Spleen (tissue), 13 donors: ENCODE measurements at regions of chr7 and their contacts with region 1.

Region 1: DNA sequence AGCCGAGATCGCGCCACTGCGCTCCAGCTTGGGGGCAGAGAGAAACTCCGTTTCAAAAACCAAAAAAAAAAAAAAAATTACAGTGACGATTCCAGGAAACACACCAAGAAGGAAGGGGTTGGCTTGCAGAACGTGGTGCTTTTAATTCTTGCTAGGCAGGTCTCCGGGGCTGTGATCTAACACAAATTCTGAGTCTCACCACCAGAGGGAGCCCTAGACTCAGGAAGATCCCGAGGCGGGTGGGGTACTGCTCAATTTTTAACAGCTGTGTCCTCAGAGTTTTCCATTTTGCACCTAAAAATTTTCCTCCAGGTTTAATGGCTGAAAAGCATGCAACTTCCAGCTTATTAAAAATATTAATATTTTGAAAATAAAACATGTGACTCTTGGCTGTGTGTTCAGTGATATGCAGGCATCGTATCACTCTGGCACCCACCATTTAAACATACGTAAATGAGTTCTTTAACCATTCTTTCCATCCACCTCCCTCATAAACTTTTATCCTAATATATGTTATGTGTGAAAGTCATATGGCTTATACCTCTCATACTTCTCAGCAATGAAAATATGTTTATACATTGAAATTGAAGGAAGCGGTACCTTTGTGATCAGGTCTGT is 26.5 kb upstream of the NUB1 start:
- DNase-seq: no peak
- H3K4me3 ChIP-seq: no peak overlapping the region
- H3K27ac ChIP-seq: no peak overlapping the region
- H3K4me1 ChIP-seq: peaks cover 0 to 19% (median 9%) of the 10 kb centered on the region in 6 donors
- H3K27me3 ChIP-seq: no peaks in the 10 kb centered on the region
- CTCF ChIP-seq: peak; percentile 67 to 89 (median 79)
- POLR2A ChIP-seq: no peak

Region 2: DNA sequence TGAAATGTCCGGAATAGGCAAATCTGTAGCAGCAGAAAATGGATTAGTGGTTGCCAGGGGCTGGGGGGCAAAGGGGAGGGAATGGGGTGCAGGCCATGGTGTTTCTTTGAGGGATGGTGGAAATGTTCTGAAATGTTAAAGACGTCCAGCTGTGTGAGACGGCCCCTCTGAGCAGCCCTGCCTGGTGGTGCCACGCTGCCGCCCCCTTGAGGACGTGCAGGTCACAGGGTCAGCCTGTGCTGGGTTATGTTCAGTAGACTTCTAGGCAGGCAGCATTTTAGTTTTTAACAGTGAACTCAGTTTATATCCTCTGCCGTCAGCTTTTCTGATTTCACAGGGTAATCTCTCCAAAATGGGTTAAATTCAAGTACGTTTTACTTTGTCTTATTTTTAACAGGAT is 35.9 kb after region 1 on chr7:
- intact Hi-C with region 1: loop called (anchors 5 kb)
- DNase-seq: peak; percentile 84
- H3K4me3 ChIP-seq: peak overlapping the region in 1 of 8 donors; percentile 70
- H3K27ac ChIP-seq: peak overlapping the region in 7 of 8 donors; percentile 61 to 96 (median 92)
- H3K4me1 ChIP-seq: peaks cover 35 to 78% (median 46%) of the 10 kb centered on the region in 6 donors
- H3K27me3 ChIP-seq: no peaks in the 10 kb centered on the region
- CTCF ChIP-seq: peak in 1 of 11 experiments; percentile 42
- POLR2A ChIP-seq: no peak

Region 3: GRCh38 chr7:151448261-151449252 is 133.4 kb after region 1 on chr7:
- intact Hi-C with region 1: loop called (anchors 5 kb)
- DNase-seq: peak; percentile 90
- H3K4me3 ChIP-seq: peak overlapping the region; percentile 30 to 70 (median 50)
- H3K27ac ChIP-seq: peak overlapping the region; percentile 35 to 83 (median 72)
- H3K4me1 ChIP-seq: peaks cover 0 to 21% (median 8%) of the 10 kb centered on the region in 6 donors
- H3K27me3 ChIP-seq: peaks cover 0 to 9% (median 0%) of the 10 kb centered on the region in 7 donors
- CTCF ChIP-seq: peak; percentile 67 to 93 (median 87)
- POLR2A ChIP-seq: no peak